ENCODE measurements at regions of chr2 and their contacts with region 1.

Region 1: DNA sequence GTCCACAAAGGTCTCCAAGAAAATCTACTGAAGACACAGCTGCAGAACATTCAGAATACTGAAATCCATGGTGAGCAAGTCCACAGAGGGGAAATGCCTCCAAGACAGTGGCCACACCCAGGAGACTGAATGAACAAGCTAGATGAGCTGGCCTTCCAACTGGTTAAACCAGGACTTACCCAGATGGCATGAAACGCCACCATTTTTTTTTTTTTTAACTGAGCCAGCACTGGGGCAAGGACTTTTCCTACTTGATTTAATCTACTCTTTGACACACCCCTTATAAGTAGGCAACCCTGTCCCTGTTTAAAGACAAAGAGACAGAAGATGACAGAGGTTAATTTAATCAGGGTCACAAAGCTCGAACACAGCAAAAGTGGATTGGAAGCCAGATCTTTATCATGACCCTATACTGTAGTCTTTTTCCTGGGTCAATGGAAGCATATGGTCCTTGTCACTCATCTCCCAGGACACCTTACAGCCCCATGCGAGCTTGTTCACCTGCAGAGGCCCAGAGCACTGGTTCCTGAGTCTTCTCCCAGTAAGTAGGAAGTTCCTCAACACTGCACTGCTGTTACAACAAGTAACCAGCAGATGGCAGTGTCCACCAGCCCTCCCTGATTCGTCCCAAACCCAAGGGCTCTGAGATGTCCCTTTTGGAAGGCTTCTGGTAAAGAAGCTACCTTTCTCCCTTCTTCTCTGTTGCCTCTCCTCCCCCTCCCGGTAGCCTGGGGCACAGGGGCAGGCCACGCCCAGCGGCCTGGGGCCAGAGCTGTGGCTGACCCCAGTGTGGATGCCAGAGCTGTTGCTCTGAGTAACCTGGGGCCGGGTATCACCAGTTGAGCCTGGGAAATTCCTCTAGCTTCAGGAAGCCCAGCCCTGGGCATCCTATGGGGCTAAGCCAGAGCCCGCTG is 5.6 kb upstream of the GDF7 start:
- DNase-seq: peak; percentile 73 to 76
- H3K4me3 ChIP-seq: no peak overlapping the region
- H3K4me1 ChIP-seq: no peaks in the 10 kb centered on the region
- H3K27me3 ChIP-seq: peaks cover 21% of the 10 kb centered on the region

Region 2: DNA sequence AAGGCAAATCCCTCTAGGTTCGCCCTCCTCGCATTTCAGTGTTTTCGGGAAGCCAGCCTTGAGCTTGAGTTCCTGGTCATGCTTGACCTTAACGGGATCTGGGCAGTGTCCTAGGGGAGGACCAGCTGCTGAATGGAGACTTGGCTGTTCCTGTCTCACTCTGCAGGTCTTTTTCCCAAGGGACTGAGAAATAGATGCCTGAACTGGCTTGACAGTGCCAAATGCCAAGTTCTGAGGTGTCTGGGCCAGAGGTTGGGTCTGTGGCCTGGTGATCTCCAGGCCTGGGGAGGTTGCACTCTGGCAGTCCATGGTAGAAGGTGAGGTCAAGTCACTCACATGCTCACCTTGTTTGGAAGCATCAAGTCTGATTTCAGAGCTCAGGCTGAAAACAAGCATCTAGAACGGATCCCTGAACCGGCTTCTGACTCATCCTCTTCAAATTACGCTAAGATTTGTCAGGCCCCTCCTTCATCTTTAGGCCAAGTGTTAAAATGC is 194.9 kb before region 1 on chr2:
- in situ Hi-C with region 1: no loop called
- DNase-seq: no peak
- H3K4me3 ChIP-seq: no peak overlapping the region
- H3K4me1 ChIP-seq: no peaks in the 10 kb centered on the region
- H3K27me3 ChIP-seq: no peaks in the 10 kb centered on the region

Region 3: DNA sequence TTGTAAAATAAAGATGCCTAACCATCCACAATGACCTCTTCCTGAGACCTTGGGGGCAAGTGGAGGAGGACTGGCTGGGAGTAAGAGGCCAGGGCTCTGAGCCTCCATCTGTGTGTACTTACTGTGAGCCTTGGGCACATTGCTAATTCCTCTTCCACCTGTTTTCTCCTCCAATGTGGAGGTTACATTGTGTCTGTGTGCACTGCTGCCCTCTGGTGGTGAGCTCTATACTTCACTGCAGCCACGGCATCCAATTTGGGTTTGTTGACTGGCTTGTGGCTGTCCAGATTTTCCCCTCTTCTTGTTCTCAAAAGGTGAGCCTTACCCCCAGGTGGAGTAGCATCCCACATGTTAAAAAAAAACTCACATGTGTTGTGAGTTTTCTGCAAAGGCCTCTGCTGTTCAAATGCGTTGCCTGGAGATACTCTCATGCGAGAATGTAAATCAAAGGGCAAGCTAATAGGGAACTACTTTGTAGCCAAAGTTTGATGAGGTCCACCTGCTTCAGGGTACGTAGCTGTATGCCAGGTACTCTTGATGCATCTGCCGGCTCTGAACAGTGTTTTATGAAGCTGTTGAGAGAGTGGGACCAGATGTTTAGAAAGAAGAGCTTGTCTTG is 301.7 kb after region 1 on chr2:
- in situ Hi-C with region 1: loop called (anchors 5 kb)
- DNase-seq: peak; percentile 35 to 83
- H3K4me3 ChIP-seq: no peak overlapping the region
- H3K4me1 ChIP-seq: no peaks in the 10 kb centered on the region
- H3K27me3 ChIP-seq: peaks cover 12% of the 10 kb centered on the region; the same call in 1 of the 2 replicates